ENCODE measurements at regions of chr11 and their contacts with region 1.

Region 1: DNA sequence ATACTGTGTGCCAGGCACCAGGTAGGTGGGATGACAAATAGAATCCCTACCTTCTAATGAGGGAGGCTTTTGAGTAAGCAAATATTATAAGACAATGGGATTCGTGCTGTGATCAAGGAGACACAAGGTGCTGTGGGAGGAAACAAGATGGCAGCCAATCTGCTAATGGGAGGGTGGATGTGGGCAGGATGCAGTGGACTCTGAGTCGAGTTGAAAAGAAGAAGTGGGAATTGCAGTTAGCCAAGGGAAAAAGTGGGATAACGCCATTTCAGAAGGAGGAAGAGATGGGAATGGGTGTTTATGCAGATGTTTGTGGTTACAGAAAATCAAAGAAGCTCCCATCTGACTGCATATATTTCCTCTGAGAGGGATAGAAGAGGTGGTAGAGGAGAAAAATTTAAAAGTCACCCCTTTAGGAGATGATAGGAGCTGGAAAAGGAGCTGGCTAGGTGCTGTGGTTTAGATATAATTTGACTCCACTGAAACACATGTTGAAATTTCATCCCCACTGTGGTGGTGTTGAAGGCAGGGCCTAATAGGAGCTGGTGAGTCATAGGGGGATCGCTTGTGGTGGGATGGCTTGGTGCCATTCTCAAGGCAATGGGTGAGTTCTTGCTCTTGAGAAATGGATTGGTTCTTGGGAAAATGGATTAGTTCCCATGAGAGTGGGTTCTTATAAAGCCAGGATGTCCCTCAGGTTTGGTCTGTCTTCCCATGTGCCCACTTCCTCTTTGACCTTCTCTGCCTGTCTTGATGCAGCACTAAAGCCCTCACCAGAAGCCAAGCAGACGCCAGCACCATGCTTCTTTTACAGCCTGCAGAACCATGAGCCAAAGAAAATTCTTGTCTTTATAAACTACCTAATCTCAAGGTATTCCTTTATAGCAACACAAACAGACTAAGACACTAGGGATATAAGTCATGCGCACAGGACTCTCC is 30.0 kb upstream of the POU2AF1 start:
- DNase-seq: no peak
- H3K4me3 ChIP-seq: no peak overlapping the region
- H3K27ac ChIP-seq: no peak overlapping the region
- H3K4me1 ChIP-seq: no peaks in the 10 kb centered on the region
- H3K27me3 ChIP-seq: no peaks in the 10 kb centered on the region
- CTCF ChIP-seq: no peak
- POLR2A ChIP-seq: no peak

Region 2: DNA sequence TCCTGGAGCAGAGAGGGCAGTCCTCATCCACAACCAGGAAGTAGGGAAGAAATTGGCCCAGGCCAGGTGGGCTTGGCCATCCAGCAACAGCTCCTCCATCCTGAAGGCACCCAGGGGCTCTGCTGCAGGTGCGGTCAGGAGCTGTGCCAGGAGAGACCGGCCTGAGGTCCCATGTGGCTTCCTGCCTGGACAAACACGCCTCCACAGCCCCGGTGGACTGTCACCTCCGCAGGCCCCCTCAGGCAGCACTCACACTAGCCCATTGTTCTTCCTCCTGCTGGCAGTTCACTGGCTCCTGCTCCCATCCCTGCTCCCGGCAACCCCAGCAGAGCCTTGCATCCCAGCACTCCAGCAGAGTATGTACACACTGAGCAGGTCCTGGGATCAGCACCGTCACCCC is 14.0 kb before region 1 on chr11:
- intact Hi-C with region 1: loop called (anchors 1 kb)
- DNase-seq: peak in 1 of 2 donors; percentile 84
- H3K4me3 ChIP-seq: no peak overlapping the region
- H3K27ac ChIP-seq: peak overlapping the region in 1 of 2 donors; percentile 37
- H3K4me1 ChIP-seq: peaks cover 0 to 7% of the 10 kb centered on the region in 2 donors
- H3K27me3 ChIP-seq: no peaks in the 10 kb centered on the region
- CTCF ChIP-seq: no peak
- POLR2A ChIP-seq: no peak

Region 3: GRCh38 chr11:111469200-111469599 is 60.1 kb after region 1 on chr11:
- intact Hi-C with region 1: no loop called
- DNase-seq: no peak
- H3K4me3 ChIP-seq: no peak overlapping the region
- H3K27ac ChIP-seq: no peak overlapping the region
- H3K4me1 ChIP-seq: no peaks in the 10 kb centered on the region
- H3K27me3 ChIP-seq: no peaks in the 10 kb centered on the region
- CTCF ChIP-seq: no peak
- POLR2A ChIP-seq: no peak

Measured in breast epithelium (tissue), 4 donors.